ENCODE measurements at regions of chr5 and their contacts with region 1.

Region 1: GRCh38 chr5:151523335-151523734 is 67.8 kb downstream of the FAT2 start:
- DNase-seq: peak; percentile 71
- H3K4me3 Mint-ChIP-seq: no peak overlapping the region
- H3K27ac Mint-ChIP-seq: no peak overlapping the region
- H3K4me1 Mint-ChIP-seq: peaks cover 2% of the 10 kb centered on the region
- H3K27me3 Mint-ChIP-seq: no peaks in the 10 kb centered on the region
- CTCF ChIP-seq: peak; percentile 84

Region 2: GRCh38 chr5:151509231-151509630 is 14.1 kb before region 1 on chr5:
- CTCF ChIA-PET with region 1: interaction called, 16 read pairs
- POLR2A ChIA-PET with region 1: interaction called, 9 read pairs
- intact Hi-C with region 1: no loop called
- DNase-seq: peak; percentile 32
- H3K4me3 Mint-ChIP-seq: no peak overlapping the region
- H3K27ac Mint-ChIP-seq: no peak overlapping the region
- H3K4me1 Mint-ChIP-seq: no peaks in the 10 kb centered on the region
- H3K27me3 Mint-ChIP-seq: no peaks in the 10 kb centered on the region
- CTCF ChIP-seq: no peak

Region 3: DNA sequence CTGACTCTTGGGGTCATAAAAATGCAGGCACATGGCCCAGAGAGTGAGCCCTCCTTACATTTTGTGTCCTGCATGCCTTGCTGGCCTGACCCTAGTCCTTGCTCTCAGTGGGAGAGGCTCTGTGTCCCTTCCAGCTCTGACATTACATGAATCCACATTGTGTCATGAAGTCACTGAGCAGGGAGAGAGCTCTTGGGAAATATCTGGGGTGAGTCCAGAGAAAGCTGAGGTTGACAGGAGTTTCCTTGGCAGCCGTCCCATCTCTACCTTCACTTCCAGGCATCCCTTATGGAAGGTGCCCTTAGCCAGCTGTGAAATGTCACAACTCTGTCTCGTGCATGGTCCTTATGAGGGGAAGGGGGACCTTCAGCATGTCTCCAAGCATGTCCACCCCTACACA is 26.8 kb after region 1 on chr5:
- CTCF ChIA-PET with region 1: interaction called, 10 read pairs
- POLR2A ChIA-PET with region 1: interaction called, 3 read pairs
- intact Hi-C with region 1: no loop called
- DNase-seq: peak; percentile 79
- H3K4me3 Mint-ChIP-seq: no peak overlapping the region
- H3K27ac Mint-ChIP-seq: no peak overlapping the region
- H3K4me1 Mint-ChIP-seq: peaks cover 13% of the 10 kb centered on the region
- H3K27me3 Mint-ChIP-seq: no peaks in the 10 kb centered on the region
- CTCF ChIP-seq: no peak

Region 4: DNA sequence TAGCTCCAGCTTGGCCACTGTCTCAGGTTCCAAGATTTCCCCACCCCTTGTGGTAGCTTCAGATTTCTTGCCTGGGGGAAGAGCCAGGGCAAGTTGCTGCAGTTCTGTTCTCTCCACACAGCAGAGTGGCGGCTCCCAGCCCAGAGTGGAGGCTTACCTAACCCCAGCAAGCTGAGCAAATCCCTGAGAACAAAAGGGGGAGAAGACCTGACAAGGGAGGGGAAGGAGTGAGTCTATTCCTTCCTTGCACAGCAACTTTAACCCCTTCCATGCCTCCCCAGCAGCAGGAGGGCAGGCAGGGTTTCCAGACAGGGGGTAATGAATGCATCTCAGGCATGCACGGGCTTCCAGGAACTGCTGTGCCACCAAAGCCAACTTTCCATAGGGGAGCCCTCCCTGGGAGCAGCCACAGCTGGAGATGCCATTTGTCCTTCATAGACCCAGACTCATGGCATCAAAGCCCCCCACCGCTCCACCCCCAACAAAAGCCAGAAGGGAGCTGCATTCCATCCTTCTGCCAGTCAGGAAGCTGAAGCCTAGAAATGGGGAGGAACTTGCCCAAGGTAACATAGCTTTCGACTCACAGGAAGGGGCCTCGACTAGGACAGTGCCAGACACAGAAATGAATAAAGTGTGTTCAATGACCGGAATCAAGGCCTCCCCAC is 96.6 kb after region 1 on chr5:
- CTCF ChIA-PET with region 1: interaction called, 11 read pairs
- POLR2A ChIA-PET with region 1: no interaction called
- intact Hi-C with region 1: no loop called
- DNase-seq: peak; percentile 99
- H3K4me3 Mint-ChIP-seq: no peak overlapping the region
- H3K27ac Mint-ChIP-seq: peak overlapping the region; percentile 28
- H3K4me1 Mint-ChIP-seq: peaks cover 81% of the 10 kb centered on the region
- H3K27me3 Mint-ChIP-seq: no peaks in the 10 kb centered on the region
- CTCF ChIP-seq: no peak

Measured in MCF 10A (cell line).